ENCODE measurements at regions of chr1 and their contacts with region 1.

Region 1: GRCh38 chr1:48498096-48498791 is 26.2 kb upstream of the SPATA6 start:
- DNase-seq: peak; percentile 78 to 80
- ATAC-seq: peak; percentile 82 to 93 (median 89)
- H3K4me3 ChIP-seq: no peak overlapping the region
- H3K27ac ChIP-seq: no peak overlapping the region
- H3K4me1 ChIP-seq: peaks cover 0 to 15% (median 0%) of the 10 kb centered on the region in 9 donors
- H3K27me3 ChIP-seq: peaks cover 0 to 5% (median 0%) of the 10 kb centered on the region in 7 donors
- CTCF ChIP-seq: peak; percentile 61 to 96 (median 89)

Region 2: GRCh38 chr1:48236716-48237470 is 261.4 kb before region 1 on chr1:
- intact Hi-C with region 1: loop called in 1 of 10 experiments (anchors 5 kb)
- DNase-seq: no peak
- ATAC-seq: peak in 1 of 8 donors; percentile 51
- H3K4me3 ChIP-seq: no peak overlapping the region
- H3K27ac ChIP-seq: no peak overlapping the region
- H3K4me1 ChIP-seq: peaks cover 0 to 3% (median 0%) of the 10 kb centered on the region in 9 donors
- H3K27me3 ChIP-seq: peaks cover 0 to 3% (median 0%) of the 10 kb centered on the region in 7 donors
- CTCF ChIP-seq: peak in 7 of 9 donors; percentile 45 to 69 (median 60)

Region 3: DNA sequence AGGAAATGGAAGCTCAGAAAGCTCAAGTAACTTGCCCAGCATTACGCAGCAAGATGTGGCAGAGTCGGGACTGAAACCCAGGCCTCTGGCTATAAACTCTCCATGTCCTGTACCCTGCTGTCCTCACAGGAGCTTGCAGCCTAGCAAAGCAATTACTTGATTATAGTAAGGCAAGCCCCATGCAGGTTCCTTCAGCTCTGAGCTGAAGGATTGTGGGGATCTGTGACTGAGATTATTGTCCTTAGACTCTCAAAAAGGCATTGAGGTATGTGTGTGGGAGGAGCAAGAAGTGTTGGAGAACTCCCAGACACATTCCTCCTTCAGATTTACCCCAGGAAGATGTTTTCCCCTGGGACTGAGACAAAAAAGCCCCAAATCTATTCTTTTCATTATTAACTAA is 97.8 kb after region 1 on chr1:
- intact Hi-C with region 1: no loop called
- DNase-seq: no peak
- ATAC-seq: no peak
- H3K4me3 ChIP-seq: no peak overlapping the region
- H3K27ac ChIP-seq: no peak overlapping the region
- H3K4me1 ChIP-seq: no peaks in the 10 kb centered on the region
- H3K27me3 ChIP-seq: peaks cover 0 to 6% (median 0%) of the 10 kb centered on the region in 7 donors
- CTCF ChIP-seq: no peak

Region 4: DNA sequence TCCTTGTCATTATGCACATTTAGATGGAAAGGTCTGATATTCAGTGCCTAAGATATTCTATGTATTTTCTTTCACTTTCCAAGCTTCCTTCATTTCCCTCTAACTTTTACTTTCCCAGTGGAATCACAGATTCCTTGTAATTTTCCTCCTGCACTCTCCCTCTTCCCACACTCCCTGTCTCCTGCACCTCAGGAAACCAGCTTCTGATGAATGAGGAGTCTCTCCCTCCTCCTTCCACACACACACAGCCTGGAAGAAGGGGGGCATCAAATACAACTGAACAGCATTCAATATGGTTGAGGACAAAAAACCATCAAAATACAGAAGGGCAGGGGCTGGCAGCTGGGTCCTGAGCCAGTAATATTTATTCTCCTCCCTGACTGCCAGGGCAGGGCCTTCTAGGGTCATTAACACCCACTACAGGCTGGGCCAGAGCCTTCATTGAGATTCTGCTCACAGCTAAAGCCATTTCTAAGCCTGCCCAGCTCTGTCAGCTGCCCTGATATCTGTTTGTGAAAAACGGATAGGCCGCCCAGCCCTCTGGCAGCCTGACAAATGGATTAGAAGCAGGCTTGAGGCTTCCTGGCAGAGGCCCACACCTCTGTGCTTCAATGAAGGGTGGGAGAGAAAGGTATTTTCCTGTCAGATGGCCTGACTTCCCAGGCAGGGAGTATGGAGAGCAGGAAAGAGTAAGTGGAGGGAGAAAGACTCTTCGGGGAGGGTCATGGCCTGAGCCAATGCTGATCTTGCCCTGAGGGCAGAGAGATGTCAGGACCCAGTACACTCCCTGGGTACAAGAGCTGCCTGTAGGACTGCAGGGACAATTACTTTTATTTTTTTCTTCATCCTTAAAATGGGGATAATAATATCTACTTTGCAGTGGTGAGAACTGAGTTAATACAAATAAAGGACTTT is 112.6 kb after region 1 on chr1:
- intact Hi-C with region 1: no loop called
- DNase-seq: peak; percentile 34 to 57
- ATAC-seq: peak; percentile 51 to 92 (median 80)
- H3K4me3 ChIP-seq: no peak overlapping the region
- H3K27ac ChIP-seq: peak overlapping the region in 5 of 10 donors; percentile 8 to 55 (median 30)
- H3K4me1 ChIP-seq: peaks cover 0 to 14% (median 0%) of the 10 kb centered on the region in 9 donors
- H3K27me3 ChIP-seq: peaks cover 0 to 7% (median 0%) of the 10 kb centered on the region in 7 donors
- CTCF ChIP-seq: no peak